Right lobe of liver (tissue), 6 donors: ENCODE measurements at regions of chr17 and their contacts with region 1.

Region 1: GRCh38 chr17:29124117-29124924 is 55.9 kb downstream of the MYO18A start:
- DNase-seq: peak in 1 of 3 donors; percentile 54
- ATAC-seq: peak; percentile 63 to 74 (median 72)
- H3K4me3 ChIP-seq: no peak overlapping the region
- H3K27ac ChIP-seq: no peak overlapping the region
- H3K4me1 ChIP-seq: peaks cover 0 to 13% (median 0%) of the 10 kb centered on the region in 4 donors
- H3K27me3 ChIP-seq: no peaks in the 10 kb centered on the region
- CTCF ChIP-seq: peak; percentile 53 to 62 (median 60)
- POLR2A ChIP-seq: no peak

Region 2: DNA sequence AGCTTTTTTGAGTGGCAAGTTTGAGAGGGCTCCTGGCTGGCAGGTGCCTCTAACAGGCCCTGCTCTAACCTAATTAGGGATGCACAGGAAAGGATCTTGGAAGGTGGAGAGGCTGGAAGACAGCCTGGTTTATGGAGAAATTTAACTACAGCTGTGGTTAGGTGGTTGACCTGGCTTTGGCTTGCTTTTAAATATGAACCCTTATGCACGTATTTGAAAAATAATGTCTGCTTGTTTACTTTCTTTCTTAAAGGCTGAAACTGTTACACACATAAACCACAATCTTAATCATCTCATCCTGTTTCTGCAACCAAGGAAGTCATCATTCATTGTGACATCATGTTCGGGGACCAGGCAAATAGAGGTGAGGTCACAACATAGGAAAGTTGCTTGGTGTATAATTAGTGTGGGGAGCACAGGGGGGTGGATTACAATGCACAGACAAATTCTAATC is 198.4 kb before region 1 on chr17:
- intact Hi-C with region 1: no loop called
- DNase-seq: no peak
- ATAC-seq: peak; percentile 60 to 80 (median 71)
- H3K4me3 ChIP-seq: no peak overlapping the region
- H3K27ac ChIP-seq: peak overlapping the region; percentile 15 to 69 (median 39)
- H3K4me1 ChIP-seq: peaks cover 0 to 4% (median 0%) of the 10 kb centered on the region in 4 donors
- H3K27me3 ChIP-seq: no peaks in the 10 kb centered on the region
- CTCF ChIP-seq: no peak
- POLR2A ChIP-seq: no peak

Region 3: GRCh38 chr17:29283271-29283895 is 159.1 kb after region 1 on chr17:
- intact Hi-C with region 1: loop called in 1 of 2 experiments (anchors 10 kb)
- DNase-seq: no peak
- ATAC-seq: no peak
- H3K4me3 ChIP-seq: no peak overlapping the region
- H3K27ac ChIP-seq: no peak overlapping the region
- H3K4me1 ChIP-seq: peaks cover 0 to 13% (median 2%) of the 10 kb centered on the region in 4 donors
- H3K27me3 ChIP-seq: no peaks in the 10 kb centered on the region
- CTCF ChIP-seq: no peak
- POLR2A ChIP-seq: no peak